Right ventricle myocardium inferior (tissue), 1 donor: ENCODE measurements at regions of chr1 and their contacts with region 1.

Region 1: GRCh38 chr1:198157241-198157846 is 546 bp downstream of the NEK7 start:
- DNase-seq: peak; percentile 96
- ATAC-seq: peak; percentile 76

Region 2: DNA sequence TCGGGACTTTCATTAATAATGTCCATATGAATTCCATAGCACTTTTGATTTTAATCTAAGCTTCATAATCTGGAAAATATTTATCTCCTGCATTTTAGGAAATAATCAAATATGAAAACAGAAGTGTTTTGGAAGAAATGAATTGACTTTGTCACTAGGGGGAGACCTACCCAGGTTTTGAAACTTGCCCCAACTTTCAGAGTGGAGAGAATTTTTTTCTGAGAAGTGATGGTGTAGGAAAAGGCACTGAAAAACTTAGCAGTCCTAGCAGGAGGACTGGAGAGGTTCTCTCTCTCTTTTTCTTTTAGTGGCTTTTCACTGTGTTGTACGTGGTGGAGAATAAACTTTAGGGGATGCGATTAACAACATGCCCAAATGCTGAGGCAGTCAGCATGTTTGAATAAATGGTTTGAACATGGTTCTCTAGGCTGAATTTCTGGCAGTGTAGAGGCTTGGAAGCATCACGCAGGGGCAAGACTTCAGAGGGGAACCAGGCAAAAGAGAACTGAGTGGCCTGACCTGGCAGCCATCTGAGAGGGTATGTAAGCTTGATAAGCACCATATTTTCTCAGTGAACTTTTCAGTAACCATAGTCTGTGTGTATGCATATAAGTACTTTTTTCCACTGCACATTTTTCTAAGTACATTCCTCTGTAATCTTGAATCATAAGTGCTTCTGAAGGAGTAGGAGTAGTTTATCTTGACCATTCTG is 68.8 kb before region 1 on chr1:
- intact Hi-C with region 1: loop called (anchors 5 kb)
- DNase-seq: no peak
- ATAC-seq: no peak

Region 3: GRCh38 chr1:198118134-198118533 is 39.2 kb before region 1 on chr1:
- intact Hi-C with region 1: loop called (anchors 5 kb)
- DNase-seq: peak; percentile 68
- ATAC-seq: peak; percentile 97

Region 4: DNA sequence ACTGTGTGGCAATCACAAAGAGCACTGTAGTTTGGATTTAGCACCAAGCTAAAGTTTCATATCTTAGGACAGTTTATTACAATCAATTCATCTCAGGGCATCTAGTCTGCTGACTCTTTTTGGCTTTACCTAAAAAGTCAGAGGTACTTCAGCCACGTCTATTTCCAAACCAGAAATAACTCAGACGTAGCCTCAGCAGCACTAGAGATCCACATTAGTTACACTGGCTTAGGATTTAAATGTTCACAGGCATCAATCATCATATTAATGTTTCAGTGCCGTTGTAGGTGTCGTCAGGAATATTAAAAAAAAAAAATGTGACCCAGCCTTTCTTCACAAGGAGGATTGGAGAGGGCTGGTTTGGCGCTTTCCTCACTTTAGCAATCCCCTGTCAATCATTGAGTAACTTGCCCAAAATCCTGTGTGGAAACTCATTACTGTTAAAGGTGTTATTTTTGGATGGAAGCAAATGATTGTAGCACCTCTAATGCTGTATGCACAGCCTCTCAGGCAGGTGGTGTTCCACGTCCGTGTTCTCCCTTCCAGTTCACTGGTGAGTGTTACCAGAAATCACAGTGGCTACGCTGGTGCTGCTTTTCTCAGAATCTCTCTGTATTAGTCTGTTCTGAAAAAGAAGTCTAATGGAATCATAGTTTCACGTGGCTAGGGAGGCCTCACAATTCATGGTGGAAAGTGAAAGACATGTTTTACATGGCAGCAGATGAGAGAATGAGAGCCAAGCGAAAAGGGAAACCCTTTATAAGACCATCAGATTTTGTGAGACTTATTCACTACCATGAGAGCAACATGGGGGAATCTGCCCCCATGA is 44.8 kb after region 1 on chr1:
- intact Hi-C with region 1: loop called (anchors 5 kb)
- DNase-seq: no peak
- ATAC-seq: no peak

Region 5: DNA sequence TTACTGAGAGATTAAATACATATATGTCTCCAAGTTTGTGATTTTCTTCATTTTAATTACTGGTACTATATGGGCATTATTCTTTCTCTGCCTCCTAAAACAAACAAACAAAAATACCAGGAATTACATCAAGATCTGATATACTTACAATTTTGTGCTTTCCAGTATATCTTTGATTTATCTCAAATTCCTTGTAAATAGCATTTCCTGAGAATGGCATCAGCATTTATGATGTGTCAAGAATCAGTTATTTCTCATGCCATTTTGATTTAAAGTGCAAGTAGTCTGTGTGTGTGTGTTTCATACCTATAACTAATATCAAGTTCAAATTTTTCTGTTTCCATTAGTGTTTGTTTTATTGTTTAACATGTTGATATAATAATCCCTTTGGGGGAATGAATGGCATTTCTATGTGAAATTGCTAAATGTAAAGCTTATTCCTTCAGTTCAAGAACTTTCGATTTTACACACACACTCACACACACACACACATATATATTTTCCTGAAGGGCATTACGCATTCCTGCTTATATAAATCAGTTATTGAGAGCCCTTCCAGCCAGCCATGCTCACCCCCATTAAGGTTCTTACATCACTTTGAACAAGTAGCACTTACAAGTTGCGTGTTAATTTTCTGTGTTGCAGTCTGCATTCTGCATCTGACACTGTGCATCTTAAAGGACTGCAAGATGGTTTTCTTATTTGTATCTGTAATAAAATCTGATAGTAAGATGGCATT is 102.2 kb after region 1 on chr1:
- intact Hi-C with region 1: loop called (anchors 5 kb)
- DNase-seq: no peak
- ATAC-seq: no peak

Region 6: GRCh38 chr1:198283222-198283621 is 125.9 kb after region 1 on chr1:
- intact Hi-C with region 1: loop called (anchors 5 kb)
- DNase-seq: no peak
- ATAC-seq: no peak